Activated CD4-positive, alpha-beta T cell treated with anti-CD3 and anti-CD28 coated beads for 36 hours (primary cell): ENCODE measurements at regions of chr6 and their contacts with region 1.

Region 1: DNA sequence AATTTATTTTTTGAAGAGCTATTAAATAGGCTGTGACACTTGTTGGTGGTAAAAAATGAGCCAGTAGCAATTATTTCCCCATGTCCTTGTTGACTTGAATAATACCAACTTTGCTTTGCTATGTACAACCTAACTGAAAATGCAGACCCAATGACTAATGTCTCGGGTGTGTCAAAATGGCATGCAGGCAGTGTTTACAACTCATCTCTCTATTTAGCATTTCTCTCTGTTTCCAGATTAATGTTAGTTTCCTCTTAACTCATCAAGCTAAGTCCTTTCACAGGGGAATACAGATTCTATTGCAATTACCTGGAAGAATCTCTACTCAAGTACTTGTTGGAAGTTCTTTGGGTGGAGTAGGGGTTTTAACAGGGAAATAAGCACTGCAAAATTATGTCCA is 504.4 kb downstream of the BCKDHB start:
- DNase-seq: no peak
- ATAC-seq: peak; percentile 44
- H3K4me3 Mint-ChIP-seq: no peak overlapping the region
- H3K27ac Mint-ChIP-seq: no peak overlapping the region
- H3K4me1 Mint-ChIP-seq: no peaks in the 10 kb centered on the region
- H3K27me3 Mint-ChIP-seq: peaks cover 2% of the 10 kb centered on the region

Region 2: DNA sequence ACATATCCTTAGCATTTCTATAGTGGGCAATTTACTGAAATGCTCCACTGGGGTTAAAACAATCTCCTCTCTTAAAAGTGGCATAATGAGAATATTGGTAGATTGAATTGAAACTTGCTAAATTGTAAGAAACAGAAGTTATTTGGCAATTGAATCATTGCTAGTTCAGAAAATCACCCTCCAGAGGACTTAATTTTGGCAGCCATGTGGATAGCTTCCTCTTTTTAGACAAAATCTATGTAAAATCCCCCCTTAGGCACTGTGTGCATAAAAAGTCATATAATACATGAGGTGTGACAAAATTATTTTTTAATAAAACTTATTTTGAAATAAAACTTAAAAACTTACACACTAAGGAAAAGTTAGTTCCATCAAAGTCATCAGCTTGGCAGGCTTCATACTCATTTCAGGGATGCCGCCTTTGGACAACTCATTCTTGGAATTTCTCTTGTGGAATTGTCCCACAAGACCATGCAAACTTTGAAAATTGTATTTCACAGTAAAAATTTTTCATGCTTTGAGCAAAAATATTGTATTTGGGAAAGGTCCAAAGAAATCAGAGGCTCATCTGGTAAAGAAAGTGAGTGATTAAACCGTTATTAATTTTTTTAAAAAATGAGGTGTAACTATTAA is 31.3 kb before region 1 on chr6:
- CTCF ChIA-PET with region 1: no interaction called
- POLR2A ChIA-PET with region 1: no interaction called
- intact Hi-C with region 1: loop called in 1 of 2 experiments (anchors 1 kb)
- DNase-seq: no peak
- ATAC-seq: no peak
- H3K4me3 Mint-ChIP-seq: no peak overlapping the region
- H3K27ac Mint-ChIP-seq: no peak overlapping the region
- H3K4me1 Mint-ChIP-seq: no peaks in the 10 kb centered on the region
- H3K27me3 Mint-ChIP-seq: no peaks in the 10 kb centered on the region

Region 3: GRCh38 chr6:80592436-80592835 is 18.4 kb before region 1 on chr6:
- CTCF ChIA-PET with region 1: no interaction called
- POLR2A ChIA-PET with region 1: no interaction called
- intact Hi-C with region 1: no loop called
- DNase-seq: no peak
- ATAC-seq: no peak
- H3K4me3 Mint-ChIP-seq: no peak overlapping the region
- H3K27ac Mint-ChIP-seq: no peak overlapping the region
- H3K4me1 Mint-ChIP-seq: no peaks in the 10 kb centered on the region
- H3K27me3 Mint-ChIP-seq: no peaks in the 10 kb centered on the region

Region 4: GRCh38 chr6:80667006-80667405 is 56.2 kb after region 1 on chr6:
- CTCF ChIA-PET with region 1: no interaction called
- POLR2A ChIA-PET with region 1: no interaction called
- intact Hi-C with region 1: no loop called
- DNase-seq: no peak
- ATAC-seq: no peak
- H3K4me3 Mint-ChIP-seq: no peak overlapping the region
- H3K27ac Mint-ChIP-seq: no peak overlapping the region
- H3K4me1 Mint-ChIP-seq: no peaks in the 10 kb centered on the region
- H3K27me3 Mint-ChIP-seq: no peaks in the 10 kb centered on the region

Region 5: DNA sequence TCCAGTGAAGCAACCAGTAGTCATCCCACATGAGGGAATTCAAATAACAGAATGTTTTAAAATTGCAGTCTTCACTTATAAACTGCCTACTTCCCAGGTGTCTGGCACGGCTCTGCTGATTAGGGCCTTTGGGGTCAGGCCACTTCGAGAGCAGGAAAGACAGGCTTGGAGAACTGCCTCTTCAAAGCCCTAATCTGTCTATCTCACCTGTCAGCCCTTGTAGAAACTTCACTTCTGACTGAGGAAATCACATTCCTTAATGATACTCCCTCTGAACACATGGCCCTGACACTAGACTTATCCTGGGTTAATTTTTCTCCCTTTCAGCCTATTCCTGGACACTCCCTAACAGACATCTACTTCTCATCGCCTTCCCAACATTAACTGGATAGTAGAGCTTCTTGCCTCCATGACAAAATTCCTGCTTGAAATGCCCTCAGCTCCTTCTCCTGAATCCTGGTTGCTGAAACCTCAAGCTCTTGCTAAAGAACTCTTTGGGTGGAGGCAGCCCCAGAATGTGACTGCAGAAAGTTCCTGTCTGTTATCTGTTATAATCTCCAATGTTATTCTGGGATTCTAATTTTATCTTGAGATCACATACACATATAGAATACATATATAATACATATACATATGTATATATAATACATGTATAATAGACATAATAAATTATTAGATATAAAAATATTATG is 683.2 kb after region 1 on chr6:
- CTCF ChIA-PET with region 1: no interaction called
- POLR2A ChIA-PET with region 1: no interaction called
- intact Hi-C with region 1: no loop called
- DNase-seq: no peak
- ATAC-seq: no peak
- H3K4me3 Mint-ChIP-seq: no peak overlapping the region
- H3K27ac Mint-ChIP-seq: no peak overlapping the region
- H3K4me1 Mint-ChIP-seq: no peaks in the 10 kb centered on the region
- H3K27me3 Mint-ChIP-seq: no peaks in the 10 kb centered on the region